ENCODE measurements at regions of chr11 and their contacts with region 1.

Region 1: GRCh38 chr11:126268708-126269579 is at the starts of genes FOXRED1 and SRPRA:
- DNase-seq: peak; percentile 99 to 100 (median 100)
- ATAC-seq: peak; percentile 98
- H3K4me3 ChIP-seq: peak within 1 kb of the TSS; percentile 93
- H3K27ac ChIP-seq: peak within 1 kb of the TSS; percentile 96
- H3K4me1 ChIP-seq: peaks cover 4 to 11% of the 10 kb centered on the region in 2 experiments; a peak in 3 of 5 replicates
- H3K27me3 ChIP-seq: no peaks in the 10 kb centered on the region; a peak in 1 of 5 replicates
- CTCF ChIP-seq: 0 out of 6 replicates have a peak, but pooled peaks of 1 of the 3 experiments have one; percentile 5
- EP300 ChIP-seq: no peak; the same call in 1 of the 2 replicates
- POLR2A ChIP-seq: peak; percentile 93
- RAD21 ChIP-seq: no peak
- polyA plus RNA-seq, gene FOXRED1: 14.1 to 26.2 TPM
- polyA plus RNA-seq, gene SRPRA: 33.5 to 106 TPM

Region 2: GRCh38 chr11:126211235-126212088 is 57.5 kb before region 1 on chr11 and contains the starts of genes FAM118B and RPUSD4:
- CTCF ChIA-PET with region 1: no interaction called
- POLR2A ChIA-PET with region 1: no interaction called
- in situ Hi-C with region 1: no loop called
- intact Hi-C with region 1: loop called (anchors 2 kb)
- DNase-seq: peak; percentile 97 to 99 (median 99)
- ATAC-seq: peak; percentile 97
- H3K4me3 ChIP-seq: peak within 1 kb of the TSS; percentile 73
- H3K27ac ChIP-seq: peak within 1 kb of the TSS; percentile 69
- H3K4me1 ChIP-seq: peaks cover 0 to 10% of the 10 kb centered on the region in 2 experiments; a peak in 1 of 5 replicates
- H3K27me3 ChIP-seq: no peaks in the 10 kb centered on the region
- CTCF ChIP-seq: peak in 1 of 3 experiments; percentile 12; a peak in 1 of 6 replicates
- EP300 ChIP-seq: no peak
- POLR2A ChIP-seq: peak; percentile 88
- RAD21 ChIP-seq: no peak
- polyA plus RNA-seq, gene FAM118B: 31.8 to 49.0 TPM
- polyA plus RNA-seq, gene RPUSD4: 27.4 to 52.8 TPM

Region 3: GRCh38 chr11:126257764-126258163 is 11.2 kb before region 1 on chr11:
- CTCF ChIA-PET with region 1: no interaction called
- POLR2A ChIA-PET with region 1: interaction called, 14 read pairs
- in situ Hi-C with region 1: no loop called
- intact Hi-C with region 1: no loop called
- DNase-seq: no peak
- ATAC-seq: no peak
- H3K4me3 ChIP-seq: no peak overlapping the region
- H3K27ac ChIP-seq: no peak overlapping the region
- H3K4me1 ChIP-seq: peaks cover 0 to 6% of the 10 kb centered on the region in 2 experiments; a peak in 2 of 5 replicates
- H3K27me3 ChIP-seq: no peaks in the 10 kb centered on the region
- CTCF ChIP-seq: no peak
- EP300 ChIP-seq: no peak
- POLR2A ChIP-seq: no peak
- RAD21 ChIP-seq: no peak

Region 4: DNA sequence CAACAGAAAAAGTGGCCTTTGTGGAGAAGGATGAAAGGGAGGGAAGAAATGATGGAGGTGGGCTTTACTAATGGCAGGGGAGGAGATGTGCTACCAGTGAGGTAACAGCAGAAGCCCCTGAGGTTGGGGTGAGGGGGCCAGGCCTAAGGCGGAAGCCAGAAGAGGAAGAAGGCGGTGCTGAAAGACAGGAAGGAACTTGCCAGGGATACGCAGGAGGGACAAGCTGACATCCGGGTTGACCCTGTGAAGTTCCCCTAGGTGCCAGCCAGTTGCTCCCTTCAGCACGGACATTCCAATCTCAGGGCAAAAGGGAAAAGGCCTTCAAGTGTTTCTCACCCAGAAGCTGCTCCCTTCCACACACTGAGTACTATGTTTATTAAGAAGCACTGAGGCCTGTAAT is 11.7 kb after region 1 on chr11:
- CTCF ChIA-PET with region 1: no interaction called
- POLR2A ChIA-PET with region 1: interaction called, 14 read pairs
- in situ Hi-C with region 1: no loop called
- intact Hi-C with region 1: no loop called
- DNase-seq: no peak
- ATAC-seq: no peak
- H3K4me3 ChIP-seq: no peak overlapping the region
- H3K27ac ChIP-seq: no peak overlapping the region
- H3K4me1 ChIP-seq: peaks cover 19 to 29% of the 10 kb centered on the region in 2 experiments; a peak in 4 of 5 replicates
- H3K27me3 ChIP-seq: no peaks in the 10 kb centered on the region
- CTCF ChIP-seq: no peak
- EP300 ChIP-seq: no peak
- POLR2A ChIP-seq: no peak
- RAD21 ChIP-seq: no peak